Activated CD4-positive, alpha-beta T cell treated with anti-CD3 and anti-CD28 coated beads for 36 hours (primary cell): ENCODE measurements at regions of chr2 and their contacts with region 1.

Region 1: DNA sequence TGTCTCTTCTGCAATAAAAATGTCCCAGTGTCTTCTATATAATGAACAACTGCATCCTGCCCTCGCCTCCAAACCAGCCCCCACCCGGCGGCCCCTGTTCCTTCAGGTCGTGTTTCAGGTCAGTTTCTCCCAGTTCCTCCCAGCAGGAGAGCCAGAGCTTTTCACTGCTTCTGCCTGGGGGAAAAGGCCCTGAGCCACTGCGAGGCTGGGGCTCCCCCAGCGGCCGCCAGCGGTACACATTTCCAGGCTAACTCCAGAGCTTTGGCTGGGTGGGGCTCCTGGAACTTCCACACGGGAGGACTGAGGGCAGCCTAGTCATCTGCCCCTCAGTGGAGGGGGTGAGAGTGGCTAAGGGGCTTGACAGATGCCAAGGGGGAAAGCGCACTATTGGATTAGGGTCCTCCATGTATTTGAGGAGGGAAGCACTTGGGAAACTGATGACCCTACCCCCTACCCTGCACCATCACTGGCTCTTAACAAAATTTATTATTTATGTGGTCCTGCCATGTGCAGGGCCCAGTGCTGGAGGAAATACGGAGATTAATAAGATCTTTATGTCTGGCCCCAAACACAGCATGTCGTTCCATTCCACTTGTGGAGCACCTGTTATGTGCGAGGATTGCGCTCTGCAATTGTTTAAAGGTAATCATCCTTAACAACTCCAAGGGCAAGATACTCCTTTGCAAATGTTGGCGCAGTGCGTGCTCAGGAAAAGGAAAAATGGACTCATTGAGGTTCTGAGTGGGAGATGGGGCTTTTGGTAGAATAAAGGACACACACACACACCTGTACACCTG is 17.3 kb upstream of the CYS1 start:
- DNase-seq: peak; percentile 59
- ATAC-seq: peak; percentile 83
- H3K4me3 Mint-ChIP-seq: no peak overlapping the region
- H3K27ac Mint-ChIP-seq: no peak overlapping the region
- H3K4me1 Mint-ChIP-seq: no peaks in the 10 kb centered on the region
- H3K27me3 Mint-ChIP-seq: peaks cover 24% of the 10 kb centered on the region

Region 2: DNA sequence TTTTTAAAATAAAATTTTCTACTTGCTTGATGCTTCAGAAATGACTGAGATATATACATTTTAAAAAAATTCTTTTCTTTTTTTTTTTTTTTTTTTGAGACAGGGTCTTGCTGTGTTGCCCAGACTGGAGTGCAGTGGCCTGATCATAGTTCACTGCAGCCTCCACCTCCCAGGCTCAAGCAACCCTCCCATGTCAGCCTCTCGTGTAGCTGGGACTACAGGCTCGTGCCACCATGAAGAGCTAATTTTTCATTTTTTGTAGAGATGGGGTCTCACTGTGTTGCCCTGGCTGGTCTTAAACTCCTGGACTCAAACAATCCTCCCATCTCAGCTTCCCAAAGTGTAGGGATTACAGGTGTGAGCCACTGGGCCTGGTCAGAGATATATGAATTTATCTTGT is 30.2 kb before region 1 on chr2:
- CTCF ChIA-PET with region 1: interaction called, 61 read pairs
- POLR2A ChIA-PET with region 1: interaction called, 6 read pairs
- intact Hi-C with region 1: loop called (anchors 1 kb)
- DNase-seq: no peak
- ATAC-seq: no peak
- H3K4me3 Mint-ChIP-seq: no peak overlapping the region
- H3K27ac Mint-ChIP-seq: no peak overlapping the region
- H3K4me1 Mint-ChIP-seq: no peaks in the 10 kb centered on the region
- H3K27me3 Mint-ChIP-seq: no peaks in the 10 kb centered on the region

Region 3: GRCh38 chr2:10083692-10084181 is 13.8 kb before region 1 on chr2:
- CTCF ChIA-PET with region 1: interaction called, 23 read pairs
- POLR2A ChIA-PET with region 1: no interaction called
- intact Hi-C with region 1: no loop called
- DNase-seq: no peak
- ATAC-seq: no peak
- H3K4me3 Mint-ChIP-seq: no peak overlapping the region
- H3K27ac Mint-ChIP-seq: no peak overlapping the region
- H3K4me1 Mint-ChIP-seq: peaks cover 12% of the 10 kb centered on the region
- H3K27me3 Mint-ChIP-seq: peaks cover 51% of the 10 kb centered on the region

Region 4: GRCh38 chr2:10400568-10400977 is 303.0 kb after region 1 on chr2:
- CTCF ChIA-PET with region 1: no interaction called
- POLR2A ChIA-PET with region 1: no interaction called
- intact Hi-C with region 1: no loop called
- DNase-seq: peak; percentile 77
- ATAC-seq: peak; percentile 80
- H3K4me3 Mint-ChIP-seq: peak overlapping the region; percentile 32
- H3K27ac Mint-ChIP-seq: peak overlapping the region; percentile 86
- H3K4me1 Mint-ChIP-seq: peaks cover 50% of the 10 kb centered on the region
- H3K27me3 Mint-ChIP-seq: no peaks in the 10 kb centered on the region